Dorsolateral prefrontal cortex (tissue), 120 donors: ENCODE measurements at regions of chr7 and their contacts with region 1.

Region 1: DNA sequence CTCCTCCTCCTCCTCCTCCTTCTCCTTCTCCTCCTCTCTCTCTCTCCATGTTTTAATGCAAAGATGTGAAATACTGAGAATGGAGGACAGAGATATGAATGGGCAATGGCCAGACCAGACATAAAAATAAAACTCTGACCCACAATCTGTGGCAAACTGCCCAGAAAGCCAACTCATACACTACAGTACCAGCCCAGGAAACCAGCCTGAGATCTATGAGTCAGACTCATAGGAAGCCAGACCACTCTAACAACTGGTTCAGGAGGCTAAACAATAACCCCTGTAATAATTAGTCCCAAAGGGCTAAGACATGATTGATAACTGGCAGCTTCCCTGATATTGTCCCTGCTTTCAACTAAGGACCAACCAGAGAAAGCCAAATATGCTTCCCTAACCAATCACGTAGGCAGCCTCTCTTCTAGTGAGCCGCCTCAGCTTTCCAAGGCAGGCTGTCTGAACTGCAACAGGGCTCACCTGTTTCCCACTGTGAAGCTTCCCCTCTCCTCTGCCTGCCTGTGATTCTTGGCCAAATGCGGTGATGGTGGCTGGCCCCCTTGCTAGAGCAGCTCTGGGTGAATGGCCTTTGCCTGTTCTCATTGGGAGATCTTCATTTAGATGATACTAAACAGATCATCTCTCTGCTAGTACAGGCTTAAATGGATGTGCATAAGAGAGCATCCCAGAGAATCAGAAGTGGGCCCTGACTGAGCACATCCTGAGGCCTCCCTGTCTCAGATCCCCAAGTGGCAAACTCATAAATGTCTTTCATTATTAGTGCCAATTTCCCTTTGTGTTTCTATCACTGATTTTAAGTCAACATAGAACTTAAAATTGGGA is 817.6 kb downstream of the TNS3 start:
- DNase-seq: no peak
- H3K4me3 ChIP-seq: no peak overlapping the region
- H3K27ac ChIP-seq: no peak overlapping the region
- H3K27me3 ChIP-seq: no peaks in the 10 kb centered on the region
- CTCF ChIP-seq: no peak

Region 2: GRCh38 chr7:46775776-46776175 is 11.5 kb after region 1 on chr7:
- intact Hi-C with region 1: loop called in 1 of 2 experiments (anchors 1 kb)
- DNase-seq: no peak
- H3K4me3 ChIP-seq: no peak overlapping the region
- H3K27ac ChIP-seq: no peak overlapping the region
- H3K27me3 ChIP-seq: peaks cover 0 to 3% (median 0%) of the 10 kb centered on the region in 45 donors
- CTCF ChIP-seq: no peak